Colonic mucosa (tissue), 4 donors: ENCODE measurements at regions of chr12 and their contacts with region 1.

Region 1: DNA sequence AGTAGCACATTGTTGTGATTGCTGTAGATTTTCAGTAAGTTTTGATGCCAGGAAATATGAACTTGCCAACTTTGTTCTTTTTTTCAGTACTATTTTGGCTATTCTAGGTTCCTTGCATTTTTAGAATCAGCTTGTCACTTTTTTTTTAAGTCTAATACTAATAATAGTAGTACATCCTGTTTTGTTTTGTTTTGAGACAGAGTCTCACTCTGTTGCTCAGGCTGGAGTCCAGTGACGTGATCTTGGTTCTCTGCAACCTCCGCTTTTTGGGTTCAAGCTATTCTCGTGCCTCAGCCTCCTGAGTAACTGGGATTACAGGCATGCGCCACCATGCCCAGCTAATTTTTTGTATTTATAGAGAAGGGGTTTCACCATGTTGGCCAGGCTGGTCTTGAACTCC is 16.5 kb downstream of the PWP1 start:
- DNase-seq: no peak
- H3K4me3 ChIP-seq: no peak overlapping the region
- H3K27ac ChIP-seq: no peak overlapping the region
- H3K4me1 ChIP-seq: no peaks in the 10 kb centered on the region
- H3K27me3 ChIP-seq: no peaks in the 10 kb centered on the region
- CTCF ChIP-seq: no peak

Region 2: GRCh38 chr12:107736914-107737313 is 34.8 kb after region 1 on chr12:
- intact Hi-C with region 1: loop called (anchors 5 kb)
- DNase-seq: no peak
- H3K4me3 ChIP-seq: no peak overlapping the region
- H3K27ac ChIP-seq: no peak overlapping the region
- H3K4me1 ChIP-seq: no peaks in the 10 kb centered on the region
- H3K27me3 ChIP-seq: no peaks in the 10 kb centered on the region
- CTCF ChIP-seq: no peak